ENCODE measurements at regions of chr9 and their contacts with region 1.

Region 1: GRCh38 chr9:33167046-33167808 is at the start of gene B4GALT1:
- DNase-seq: peak; percentile 96
- H3K4me3 Mint-ChIP-seq: peak within 1 kb of the TSS; percentile 96
- H3K27ac Mint-ChIP-seq: peak within 1 kb of the TSS; percentile 89
- H3K4me1 Mint-ChIP-seq: peaks cover 52% of the 10 kb centered on the region
- H3K27me3 Mint-ChIP-seq: no peaks in the 10 kb centered on the region
- CTCF ChIP-seq: no peak
- total RNA-seq, gene B4GALT1: 155 and 184 TPM in 2 replicates

Region 2: DNA sequence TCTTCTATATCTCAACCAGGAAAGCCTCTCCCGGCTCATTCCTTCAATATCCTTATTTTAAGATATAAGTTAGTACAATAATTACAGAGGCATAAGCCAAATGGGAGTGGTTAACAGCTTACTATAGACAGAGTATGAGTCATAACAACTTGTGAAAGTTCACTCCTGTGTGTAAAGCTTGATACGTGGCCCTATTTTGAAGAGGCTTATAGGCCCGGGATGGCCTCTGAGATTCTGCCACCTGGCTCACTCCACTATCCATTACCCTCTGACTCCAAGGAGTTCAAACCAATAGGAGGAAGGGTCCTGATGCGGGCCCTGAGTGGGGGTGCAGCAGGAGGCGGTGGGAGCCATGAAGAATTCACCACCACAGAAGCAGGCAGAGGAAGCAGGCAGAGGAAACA is 36.7 kb before region 1 on chr9:
- CTCF ChIA-PET with region 1: interaction called, 6 read pairs
- POLR2A ChIA-PET with region 1: interaction called, 242 read pairs
- intact Hi-C with region 1: loop called (anchors 2 kb)
- DNase-seq: peak; percentile 75
- H3K4me3 Mint-ChIP-seq: peak overlapping the region; percentile 22
- H3K27ac Mint-ChIP-seq: peak overlapping the region; percentile 96
- H3K4me1 Mint-ChIP-seq: peaks cover 60% of the 10 kb centered on the region
- H3K27me3 Mint-ChIP-seq: no peaks in the 10 kb centered on the region
- CTCF ChIP-seq: no peak

Region 3: DNA sequence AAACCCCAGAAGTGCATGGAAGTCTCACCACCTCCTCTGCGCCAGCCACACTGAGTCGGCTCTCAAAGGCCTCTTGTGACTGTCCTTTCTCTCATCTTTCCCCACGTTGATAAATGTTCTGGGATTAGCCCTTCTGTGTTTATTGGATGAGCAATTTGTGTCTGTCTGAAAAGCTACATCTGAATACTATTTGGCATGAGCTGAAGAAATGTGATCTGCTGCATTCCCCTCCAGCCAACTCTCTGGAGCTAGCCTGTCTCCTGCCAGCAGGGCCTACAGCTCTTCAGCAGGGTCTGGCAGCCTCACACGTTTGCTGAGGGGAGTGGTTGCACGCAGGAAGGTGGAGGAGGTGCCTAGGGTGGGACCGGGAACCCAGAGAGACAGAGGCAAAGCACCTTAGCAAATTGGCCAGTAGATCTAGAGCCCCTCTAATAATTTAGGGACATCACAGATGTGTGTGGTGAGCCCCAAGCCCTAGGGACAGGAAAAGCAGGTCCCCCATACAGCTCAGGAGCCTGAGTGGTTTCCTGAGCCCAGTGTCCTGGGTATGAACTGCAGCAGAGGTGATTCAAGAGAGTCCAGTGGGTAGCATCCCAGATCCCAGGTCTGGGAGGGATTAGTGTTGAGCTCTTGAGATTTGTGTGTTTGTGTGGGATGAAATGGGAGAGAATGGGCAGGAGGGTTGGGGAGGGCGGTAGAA is 20.4 kb after region 1 on chr9:
- CTCF ChIA-PET with region 1: no interaction called
- POLR2A ChIA-PET with region 1: interaction called, 57 read pairs
- intact Hi-C with region 1: no loop called
- DNase-seq: no peak
- H3K4me3 Mint-ChIP-seq: no peak overlapping the region
- H3K27ac Mint-ChIP-seq: no peak overlapping the region
- H3K4me1 Mint-ChIP-seq: peaks cover 29% of the 10 kb centered on the region
- H3K27me3 Mint-ChIP-seq: no peaks in the 10 kb centered on the region
- CTCF ChIP-seq: no peak

Region 4: GRCh38 chr9:33225319-33226149 is 58.3 kb after region 1 on chr9:
- CTCF ChIA-PET with region 1: interaction called, 14 read pairs
- POLR2A ChIA-PET with region 1: interaction called, 188 read pairs
- intact Hi-C with region 1: loop called (anchors 2 kb)
- DNase-seq: peak; percentile 83
- H3K4me3 Mint-ChIP-seq: no peak overlapping the region
- H3K27ac Mint-ChIP-seq: no peak overlapping the region
- H3K4me1 Mint-ChIP-seq: peaks cover 33% of the 10 kb centered on the region
- H3K27me3 Mint-ChIP-seq: no peaks in the 10 kb centered on the region
- CTCF ChIP-seq: peak; percentile 52

Region 5: DNA sequence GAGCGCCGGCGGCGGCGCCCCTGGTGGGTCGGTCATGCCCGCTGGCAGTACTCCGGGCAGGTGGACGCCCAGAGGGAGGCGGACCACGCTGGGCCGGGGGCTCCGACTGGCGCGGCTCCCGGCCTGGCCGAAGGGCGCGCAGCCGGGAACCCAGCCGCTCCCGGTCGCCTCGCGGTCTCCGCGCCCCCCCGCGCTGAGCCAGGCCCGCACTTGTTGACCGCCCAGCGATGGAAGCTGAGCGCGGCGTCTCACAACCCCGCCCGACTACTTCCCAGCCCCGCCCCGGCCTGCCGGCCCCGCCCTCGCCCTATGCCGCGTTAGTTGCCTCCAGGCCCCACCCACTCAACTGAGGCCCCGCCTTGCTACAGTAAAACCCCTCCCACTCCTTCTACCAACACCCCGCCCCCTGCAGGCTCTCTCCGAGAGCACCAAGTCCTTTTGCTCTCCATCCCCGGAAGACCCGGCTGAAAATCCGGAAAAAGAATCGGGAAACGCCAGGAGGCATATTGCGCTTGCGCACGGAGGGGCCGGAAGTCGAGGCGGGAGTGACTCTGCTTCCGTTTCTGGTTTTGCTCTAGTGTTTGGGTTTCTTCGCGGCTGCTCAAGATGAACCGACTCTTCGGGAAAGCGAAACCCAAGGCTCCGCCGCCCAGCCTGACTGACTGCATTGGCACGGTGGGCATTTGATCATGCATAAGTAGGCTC is 97.4 kb after region 1 on chr9 and contains the starts of genes BAG1 and CHMP5:
- CTCF ChIA-PET with region 1: no interaction called
- POLR2A ChIA-PET with region 1: interaction called, 64 read pairs
- intact Hi-C with region 1: no loop called
- DNase-seq: peak; percentile 99
- H3K4me3 Mint-ChIP-seq: peak within 1 kb of the TSS; percentile 99
- H3K27ac Mint-ChIP-seq: peak within 1 kb of the TSS; percentile 95
- H3K4me1 Mint-ChIP-seq: peaks cover 33% of the 10 kb centered on the region
- H3K27me3 Mint-ChIP-seq: no peaks in the 10 kb centered on the region
- CTCF ChIP-seq: no peak
- total RNA-seq, gene BAG1: 75.7 and 91.8 TPM in 2 replicates
- total RNA-seq, gene CHMP5: 67.6 and 85.1 TPM in 2 replicates

Measured in MCF 10A (cell line).